ENCODE measurements at regions of chr7 and their contacts with region 1.

Region 1: DNA sequence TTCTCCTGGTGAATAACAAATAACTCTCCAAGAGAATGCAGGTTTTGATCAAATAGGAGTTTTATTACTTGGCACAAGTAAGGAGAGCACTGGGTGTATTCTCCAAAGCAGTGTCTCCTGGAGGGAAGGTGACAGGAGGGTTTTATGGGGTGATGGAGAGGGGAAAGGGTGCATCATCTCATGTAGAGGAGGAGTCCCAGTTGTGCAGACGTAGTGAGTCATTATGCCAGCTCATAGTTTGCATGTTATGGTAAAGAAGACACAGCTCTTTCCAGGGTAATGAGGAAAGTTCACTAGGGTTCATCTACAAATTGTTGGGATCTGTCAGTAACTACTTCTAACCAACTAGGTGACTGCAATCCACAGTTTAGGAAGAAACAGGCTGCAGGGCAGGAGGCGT is 347.9 kb upstream of the MEOX2 start:
- DNase-seq: no peak
- H3K4me3 ChIP-seq: no peak overlapping the region
- H3K27ac ChIP-seq: no peak overlapping the region
- H3K4me1 ChIP-seq: no peaks in the 10 kb centered on the region
- H3K27me3 ChIP-seq: no peaks in the 10 kb centered on the region
- CTCF ChIP-seq: no peak
- EP300 ChIP-seq: no peak
- POLR2A ChIP-seq: no peak

Region 2: GRCh38 chr7:15007507-15007906 is 1026.8 kb before region 1 on chr7:
- in situ Hi-C with region 1: no loop called
- intact Hi-C with region 1: loop called (anchors 10 kb)
- DNase-seq: no peak
- H3K4me3 ChIP-seq: no peak overlapping the region
- H3K27ac ChIP-seq: no peak overlapping the region
- H3K4me1 ChIP-seq: no peaks in the 10 kb centered on the region
- H3K27me3 ChIP-seq: no peaks in the 10 kb centered on the region
- CTCF ChIP-seq: no peak
- EP300 ChIP-seq: no peak
- POLR2A ChIP-seq: no peak

Region 3: GRCh38 chr7:16015981-16016380 is 18.4 kb before region 1 on chr7:
- in situ Hi-C with region 1: no loop called
- intact Hi-C with region 1: no loop called
- DNase-seq: no peak
- H3K4me3 ChIP-seq: no peak overlapping the region
- H3K27ac ChIP-seq: no peak overlapping the region
- H3K4me1 ChIP-seq: no peaks in the 10 kb centered on the region
- H3K27me3 ChIP-seq: no peaks in the 10 kb centered on the region
- CTCF ChIP-seq: no peak
- EP300 ChIP-seq: no peak
- POLR2A ChIP-seq: no peak

Region 4: GRCh38 chr7:16106300-16106699 is 71.9 kb after region 1 on chr7:
- in situ Hi-C with region 1: no loop called
- intact Hi-C with region 1: no loop called
- DNase-seq: no peak
- H3K4me3 ChIP-seq: no peak overlapping the region
- H3K27ac ChIP-seq: no peak overlapping the region
- H3K4me1 ChIP-seq: no peaks in the 10 kb centered on the region
- H3K27me3 ChIP-seq: no peaks in the 10 kb centered on the region
- CTCF ChIP-seq: no peak
- EP300 ChIP-seq: no peak
- POLR2A ChIP-seq: no peak

Measured in transverse colon (tissue), 4 donors.